Dorsolateral prefrontal cortex (tissue), 120 donors: ENCODE measurements at regions of chr4 and their contacts with region 1.

Region 1: DNA sequence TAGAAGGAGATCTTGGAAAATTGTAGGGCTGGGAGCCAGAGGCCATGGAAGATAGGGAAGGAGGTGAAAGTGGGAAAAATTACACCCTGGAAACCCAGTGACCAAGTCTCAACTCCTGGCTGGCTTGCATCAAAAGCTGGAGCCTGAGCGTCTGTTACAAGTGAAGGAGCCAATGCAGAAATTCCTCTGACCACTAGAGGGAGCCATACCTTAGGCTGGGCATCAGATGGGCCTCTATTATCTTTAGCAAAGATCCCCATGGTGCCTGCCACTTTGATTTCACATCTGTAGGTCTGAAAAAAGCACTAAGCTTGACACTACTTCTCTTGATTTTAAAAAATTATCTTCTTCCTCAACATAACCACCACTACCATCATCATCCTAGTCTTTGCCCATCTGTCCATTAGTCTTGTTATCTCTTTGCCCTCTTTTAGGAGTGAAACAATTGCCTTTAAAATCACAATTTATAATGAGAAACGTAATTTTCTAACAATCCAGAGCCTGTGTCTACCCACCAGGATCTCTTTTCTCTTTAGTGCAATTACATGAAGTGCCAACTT is 62.9 kb downstream of the ANAPC4 start:
- DNase-seq: peak in 5 of 10 donors; percentile 44 to 80 (median 67)
- H3K4me3 ChIP-seq: no peak overlapping the region
- H3K27ac ChIP-seq: peak overlapping the region in 29 of 59 donors; percentile 2 to 71 (median 34)
- H3K27me3 ChIP-seq: no peaks in the 10 kb centered on the region
- CTCF ChIP-seq: peak; percentile 76 to 93 (median 87)

Region 2: GRCh38 chr4:25400699-25401399 is 39.1 kb before region 1 on chr4:
- intact Hi-C with region 1: no loop called
- DNase-seq: no peak
- H3K4me3 ChIP-seq: no peak overlapping the region
- H3K27ac ChIP-seq: peak overlapping the region in 20 of 59 donors; percentile 6 to 63 (median 25)
- H3K27me3 ChIP-seq: no peaks in the 10 kb centered on the region
- CTCF ChIP-seq: no peak

Region 3: DNA sequence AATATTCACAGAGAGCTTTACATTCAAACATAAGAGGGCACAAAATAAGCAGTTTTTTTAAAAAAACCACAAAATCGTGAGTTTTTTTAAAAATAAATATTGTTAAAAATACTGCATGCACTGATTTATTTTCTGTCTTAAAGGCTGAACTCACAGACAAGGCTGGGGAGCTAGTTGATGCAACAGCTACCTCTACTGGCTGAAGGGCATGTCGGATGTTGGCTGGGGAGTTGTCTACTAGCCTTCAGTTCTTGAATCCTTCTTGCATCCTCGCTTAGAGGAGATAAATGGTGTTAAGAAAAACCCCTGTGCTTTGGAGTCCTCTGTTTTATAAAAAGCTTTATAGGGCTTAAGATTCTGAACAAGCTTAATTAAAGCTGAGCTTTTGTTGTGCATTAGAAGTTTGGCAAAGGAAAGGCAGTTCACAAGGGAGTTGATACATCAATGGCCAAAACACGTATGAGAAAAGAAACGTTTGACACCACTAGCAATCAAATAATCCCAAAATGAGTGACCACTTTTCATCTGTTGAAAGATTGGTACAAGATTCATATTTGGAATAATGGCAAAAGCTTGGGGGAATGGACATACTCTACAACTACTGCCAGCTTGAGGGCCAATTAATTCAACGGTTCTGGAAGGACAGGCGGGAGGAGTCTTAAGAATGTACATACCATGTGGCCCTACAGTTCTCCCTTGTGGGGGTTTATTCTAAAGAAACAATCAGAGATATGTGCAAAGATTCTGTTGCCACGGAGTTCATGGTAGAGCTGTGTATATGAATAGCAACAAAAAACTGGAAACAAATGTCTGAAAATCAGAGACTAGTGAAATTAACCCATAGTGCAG is 328.1 kb after region 1 on chr4:
- intact Hi-C with region 1: loop called (anchors 1 to 2 kb)
- DNase-seq: peak; percentile 28 to 79 (median 72)
- H3K4me3 ChIP-seq: no peak overlapping the region
- H3K27ac ChIP-seq: peak overlapping the region in 7 of 59 donors; percentile 3 to 44 (median 36)
- H3K27me3 ChIP-seq: peaks cover 0 to 1% (median 0%) of the 10 kb centered on the region in 45 donors
- CTCF ChIP-seq: peak; percentile 41 to 91 (median 79)

Region 4: GRCh38 chr4:25913851-25914669 is 474.1 kb after region 1 on chr4 and contains the start of gene SMIM20:
- intact Hi-C with region 1: loop called in 1 of 2 experiments (anchors 5 kb)
- DNase-seq: peak; percentile 85 to 96 (median 94)
- H3K4me3 ChIP-seq: peak within 1 kb of the TSS; percentile 51 to 98 (median 81)
- H3K27ac ChIP-seq: peak within 1 kb of the TSS; percentile 27 to 92 (median 83)
- H3K27me3 ChIP-seq: no peaks in the 10 kb centered on the region
- CTCF ChIP-seq: peak in 11 of 56 donors; percentile 4 to 39 (median 19)
- total RNA-seq, gene SMIM20: 13.4 to 30.6 (median 19.7) TPM